ENCODE measurements at regions of chr15 and their contacts with region 1.

Region 1: DNA sequence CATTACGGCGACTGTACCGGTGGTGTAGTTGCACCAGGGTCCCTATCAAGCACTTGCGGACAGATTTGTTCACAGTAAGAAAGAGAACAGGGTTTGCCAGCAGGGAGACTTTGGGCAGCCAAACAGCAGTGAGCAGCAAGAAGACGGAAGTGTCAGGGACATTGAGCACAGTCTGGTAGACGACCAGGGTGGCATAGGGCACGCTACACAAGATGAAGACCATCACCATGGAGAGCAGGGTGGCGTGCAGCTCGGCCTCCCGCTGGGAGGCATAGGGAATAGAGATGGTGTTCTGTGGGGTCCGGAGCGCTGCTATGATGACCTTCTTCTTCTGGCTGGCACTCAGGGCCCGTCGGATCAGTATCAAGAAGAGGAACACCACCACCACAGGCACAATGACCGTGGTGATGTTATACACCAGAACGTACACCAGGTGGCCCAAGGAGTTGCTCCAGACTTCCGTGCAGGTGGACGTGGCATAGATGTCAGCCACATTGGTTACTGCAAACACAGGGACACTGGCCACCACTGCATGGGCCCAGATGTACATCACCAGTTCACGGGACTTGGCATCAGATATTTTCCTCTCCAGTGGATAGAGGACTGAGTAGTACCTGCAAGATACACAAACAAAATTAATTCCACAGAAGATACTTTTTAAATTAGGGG is 19.1 kb upstream of the FSIP1 start:
- DNase-seq: no peak
- H3K4me3 ChIP-seq: no peak overlapping the region
- CTCF ChIP-seq: peak; percentile 36

Region 2: GRCh38 chr15:39770748-39771689 is 30.8 kb before region 1 on chr15:
- CTCF ChIA-PET with region 1: no interaction called
- POLR2A ChIA-PET with region 1: no interaction called
- DNase-seq: peak; percentile 79
- H3K4me3 ChIP-seq: no peak overlapping the region
- CTCF ChIP-seq: no peak

Region 3: DNA sequence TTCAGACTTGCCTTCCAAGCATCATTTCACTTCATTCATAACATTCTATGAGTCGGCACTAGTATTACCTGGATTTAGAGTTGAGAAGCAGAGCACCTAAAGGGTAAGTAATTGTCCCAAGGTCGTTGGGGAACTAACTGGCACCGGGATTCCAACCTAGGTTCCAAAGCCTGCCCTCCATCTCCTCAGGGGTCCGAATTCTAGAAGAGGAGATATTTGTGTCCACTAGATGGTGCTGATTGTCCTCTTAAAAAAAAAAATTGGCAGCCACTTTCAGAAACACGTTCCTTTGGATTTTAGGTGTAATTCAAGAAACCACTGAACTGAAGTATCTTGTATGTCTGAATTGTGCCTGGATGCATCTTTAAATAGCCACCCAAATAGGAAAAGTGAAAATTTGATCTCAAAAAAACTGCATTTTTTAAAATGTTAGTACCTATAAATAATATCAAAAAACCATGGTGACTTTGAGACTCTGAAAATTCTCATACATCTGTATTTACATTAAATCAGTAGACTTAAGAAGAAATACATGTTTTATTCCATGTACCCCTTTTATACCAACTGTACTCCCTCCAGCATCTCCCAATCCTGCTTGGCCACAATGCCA is 15.2 kb before region 1 on chr15:
- CTCF ChIA-PET with region 1: interaction called, 32 read pairs
- POLR2A ChIA-PET with region 1: no interaction called
- DNase-seq: no peak
- H3K4me3 ChIP-seq: no peak overlapping the region
- CTCF ChIP-seq: peak; percentile 41

Region 4: DNA sequence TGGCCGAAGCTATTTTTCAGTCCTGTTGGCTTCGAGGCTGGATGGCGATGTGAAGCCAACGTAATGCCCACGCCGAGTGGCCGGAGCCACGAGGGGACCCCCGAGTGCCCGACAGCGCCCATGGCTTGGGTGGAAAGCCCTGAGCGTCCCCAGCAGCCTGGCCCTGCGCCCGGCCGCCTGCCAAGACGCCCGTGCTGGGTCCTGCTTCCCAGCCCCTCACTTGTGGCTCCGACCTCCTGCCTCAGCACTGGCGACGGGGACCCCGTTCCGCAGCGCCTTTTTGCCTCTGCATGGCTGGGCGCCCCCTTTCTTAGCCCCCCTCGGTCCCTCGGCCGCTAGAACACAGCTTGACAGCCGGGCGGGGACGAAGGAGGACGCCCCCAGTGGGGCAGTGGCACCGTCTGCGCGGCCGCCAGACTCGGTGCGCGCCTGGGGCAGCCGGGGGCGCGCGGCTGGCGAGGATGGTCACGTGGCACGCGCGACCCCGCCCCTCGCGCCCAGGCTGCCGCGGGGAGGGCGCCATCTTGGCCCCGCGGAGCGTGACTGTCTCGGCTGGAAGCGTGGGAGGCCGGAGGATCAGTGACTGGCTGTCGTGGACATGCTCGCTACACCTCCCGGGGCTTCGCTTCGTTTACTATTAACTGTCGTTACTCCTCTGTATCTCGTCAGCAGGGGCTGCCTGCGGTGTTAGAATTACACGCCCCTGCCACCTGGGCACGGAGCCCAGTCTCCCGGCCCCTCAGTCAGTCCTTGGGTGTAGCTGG is 118.9 kb after region 1 on chr15:
- CTCF ChIA-PET with region 1: no interaction called
- POLR2A ChIA-PET with region 1: no interaction called
- DNase-seq: no peak
- H3K4me3 ChIP-seq: peak overlapping the region; percentile 90
- CTCF ChIP-seq: peak; percentile 9

Measured in AG04449 (cell line).